Thyroid gland (tissue), 4 donors: ENCODE measurements at regions of chr15 and their contacts with region 1.

Region 1: GRCh38 chr15:67065444-67066093 is at the start of gene SMAD3:
- DNase-seq: peak; percentile 93 to 94
- H3K4me3 ChIP-seq: peak within 1 kb of the TSS; percentile 42 to 84 (median 82)
- H3K27ac ChIP-seq: peak within 1 kb of the TSS; percentile 91 to 94 (median 92)
- H3K4me1 ChIP-seq: peaks cover 33 to 41% of the 10 kb centered on the region in 2 donors
- H3K27me3 ChIP-seq: no peaks in the 10 kb centered on the region
- CTCF ChIP-seq: no peak
- POLR2A ChIP-seq: peak; percentile 70 to 89
- total RNA-seq, gene SMAD3: 33.6 to 66.5 (median 47.3) TPM

Region 2: DNA sequence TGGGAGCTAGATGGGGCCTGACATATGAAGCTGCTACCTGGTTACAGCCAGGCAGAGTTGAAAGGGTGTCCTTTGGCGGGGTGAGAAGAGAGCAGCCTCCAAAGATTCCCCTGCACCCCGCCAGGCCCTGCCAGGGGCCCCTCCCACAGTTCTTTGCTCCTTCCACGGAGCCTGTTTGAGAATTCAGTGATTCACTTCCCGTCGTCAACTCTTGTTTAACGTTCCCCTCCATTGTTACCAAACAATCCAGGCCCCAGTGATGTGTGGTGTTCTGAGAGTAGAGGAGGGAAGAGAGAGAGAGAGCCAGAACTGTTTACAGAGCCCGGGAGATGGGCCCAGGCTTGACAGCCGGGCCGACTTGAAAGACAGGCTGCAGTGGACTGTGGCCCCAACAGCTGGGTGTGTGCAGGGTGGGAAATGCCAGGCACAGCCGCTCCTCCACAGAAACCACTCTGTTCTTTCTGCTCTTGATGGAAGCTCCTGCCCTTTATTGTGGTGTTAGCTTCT is 81.4 kb after region 1 on chr15:
- intact Hi-C with region 1: loop called (anchors 5 kb)
- DNase-seq: peak in 1 of 2 donors; percentile 59
- H3K4me3 ChIP-seq: no peak overlapping the region
- H3K27ac ChIP-seq: peak overlapping the region; percentile 85 to 92 (median 87)
- H3K4me1 ChIP-seq: peaks cover 80 to 95% of the 10 kb centered on the region in 2 donors
- H3K27me3 ChIP-seq: no peaks in the 10 kb centered on the region
- CTCF ChIP-seq: no peak
- POLR2A ChIP-seq: no peak

Region 3: GRCh38 chr15:67254238-67255175 is 188.9 kb after region 1 on chr15 and contains the starts of genes AAGAB and IQCH:
- intact Hi-C with region 1: loop called (anchors 10 kb)
- DNase-seq: peak; percentile 98 to 99
- H3K4me3 ChIP-seq: peak within 1 kb of the TSS; percentile 31 to 99 (median 81)
- H3K27ac ChIP-seq: peak within 1 kb of the TSS; percentile 67 to 88 (median 81)
- H3K4me1 ChIP-seq: peaks cover 5 to 23% of the 10 kb centered on the region in 2 donors
- H3K27me3 ChIP-seq: no peaks in the 10 kb centered on the region
- CTCF ChIP-seq: no peak
- POLR2A ChIP-seq: peak; percentile 47 to 86
- total RNA-seq, gene AAGAB: 53.7 to 61.9 (median 54.6) TPM
- total RNA-seq, gene IQCH: 9.6 to 13.7 (median 11.8) TPM